Panc1 (cell line): ENCODE measurements at regions of chr1 and their contacts with region 1.

Region 1: DNA sequence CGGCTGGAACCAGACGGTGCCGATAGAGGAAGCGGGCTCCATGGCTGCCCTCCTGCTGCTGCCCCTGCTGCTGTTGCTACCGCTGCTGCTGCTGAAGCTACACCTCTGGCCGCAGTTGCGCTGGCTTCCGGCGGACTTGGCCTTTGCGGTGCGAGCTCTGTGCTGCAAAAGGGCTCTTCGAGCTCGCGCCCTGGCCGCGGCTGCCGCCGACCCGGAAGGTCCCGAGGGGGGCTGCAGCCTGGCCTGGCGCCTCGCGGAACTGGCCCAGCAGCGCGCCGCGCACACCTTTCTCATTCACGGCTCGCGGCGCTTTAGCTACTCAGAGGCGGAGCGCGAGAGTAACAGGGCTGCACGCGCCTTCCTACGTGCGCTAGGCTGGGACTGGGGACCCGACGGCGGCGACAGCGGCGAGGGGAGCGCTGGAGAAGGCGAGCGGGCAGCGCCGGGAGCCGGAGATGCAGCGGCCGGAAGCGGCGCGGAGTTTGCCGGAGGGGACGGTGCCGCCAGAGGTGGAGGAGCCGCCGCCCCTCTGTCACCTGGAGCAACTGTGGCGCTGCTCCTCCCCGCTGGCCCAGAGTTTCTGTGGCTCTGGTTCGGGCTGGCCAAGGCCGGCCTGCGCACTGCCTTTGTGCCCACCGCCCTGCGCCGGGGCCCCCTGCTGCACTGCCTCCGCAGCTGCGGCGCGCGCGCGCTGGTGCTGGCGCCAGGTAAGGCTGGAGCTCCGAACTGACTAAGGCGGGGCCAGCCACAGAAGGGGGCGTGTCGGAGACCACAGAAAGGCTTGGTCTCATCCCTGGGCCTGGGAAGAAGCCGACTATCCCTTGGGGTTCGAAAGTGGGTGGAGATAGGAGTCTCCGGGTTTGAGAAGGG is 486 bp downstream of the SLC27A3 start:
- DNase-seq: no peak
- ATAC-seq: peak; percentile 73
- H3K4me3 ChIP-seq: peak overlapping the region; percentile 60 to 61
- H3K27ac ChIP-seq: peak overlapping the region; percentile 51; the same call in 1 of the 2 replicates
- H3K4me1 ChIP-seq: peaks cover 8% of the 10 kb centered on the region
- H3K27me3 ChIP-seq: no peaks in the 10 kb centered on the region
- CTCF ChIP-seq: no peak

Region 2: GRCh38 chr1:153238536-153238935 is 537.2 kb before region 1 on chr1:
- CTCF ChIA-PET with region 1: no interaction called
- POLR2A ChIA-PET with region 1: no interaction called
- in situ Hi-C with region 1: no loop called
- intact Hi-C with region 1: no loop called
- DNase-seq: no peak
- ATAC-seq: peak; percentile 70
- H3K4me3 ChIP-seq: no peak overlapping the region
- H3K27ac ChIP-seq: no peak overlapping the region
- H3K4me1 ChIP-seq: no peaks in the 10 kb centered on the region
- H3K27me3 ChIP-seq: peaks cover 6% of the 10 kb centered on the region; the same call in 1 of the 2 replicates
- CTCF ChIP-seq: peak; percentile 52

Region 3: GRCh38 chr1:153510984-153511410 is 264.7 kb before region 1 on chr1:
- CTCF ChIA-PET with region 1: no interaction called
- POLR2A ChIA-PET with region 1: no interaction called
- in situ Hi-C with region 1: no loop called
- intact Hi-C with region 1: loop called (anchors 10 kb)
- DNase-seq: peak; percentile 65
- ATAC-seq: peak; percentile 87
- H3K4me3 ChIP-seq: no peak overlapping the region
- H3K27ac ChIP-seq: peak overlapping the region; percentile 79
- H3K4me1 ChIP-seq: peaks cover 47% of the 10 kb centered on the region
- H3K27me3 ChIP-seq: no peaks in the 10 kb centered on the region
- CTCF ChIP-seq: peak; percentile 96